Endothelial cell of umbilical vein (primary cell): ENCODE measurements at regions of chr7 and their contacts with region 1.

Region 1: GRCh38 chr7:37352974-37353948 is 95.4 kb downstream of the ELMO1 start:
- DNase-seq: no peak
- H3K4me3 ChIP-seq: no peak overlapping the region
- H3K27ac ChIP-seq: peak overlapping the region; percentile 66
- H3K4me1 ChIP-seq: peaks cover 21% of the 10 kb centered on the region
- H3K27me3 ChIP-seq: no peaks in the 10 kb centered on the region
- CTCF ChIP-seq: peak; percentile 6 to 11
- POLR2A ChIP-seq: no peak

Region 2: DNA sequence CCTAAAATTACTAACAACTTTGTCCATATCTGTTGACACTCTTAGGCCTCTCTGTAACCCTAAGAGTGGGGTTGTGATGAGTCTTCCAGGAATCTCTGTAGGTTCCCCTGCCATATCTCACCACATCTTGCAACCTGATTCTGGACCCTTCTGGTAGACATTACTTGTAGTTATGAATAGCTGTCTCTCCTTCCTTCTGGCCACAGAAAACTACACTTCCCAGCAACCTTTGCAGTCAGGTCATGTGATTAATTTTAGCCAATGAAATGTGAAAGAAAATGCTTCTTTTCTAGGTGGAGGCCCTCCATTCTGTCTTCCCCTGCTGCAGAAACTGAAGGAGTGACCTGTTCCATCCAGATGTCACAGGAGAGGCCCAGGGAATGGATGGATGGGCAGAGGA is 481.4 kb before region 1 on chr7:
- CTCF ChIA-PET with region 1: no interaction called
- POLR2A ChIA-PET with region 1: no interaction called
- dilution Hi-C with region 1: no loop called
- intact Hi-C with region 1: no loop called
- DNase-seq: peak; percentile 18
- H3K4me3 ChIP-seq: no peak overlapping the region
- H3K27ac ChIP-seq: no peak overlapping the region
- H3K4me1 ChIP-seq: no peaks in the 10 kb centered on the region
- H3K27me3 ChIP-seq: no peaks in the 10 kb centered on the region
- CTCF ChIP-seq: no peak
- POLR2A ChIP-seq: no peak

Region 3: GRCh38 chr7:37408291-37409228 is 55.3 kb after region 1 on chr7:
- CTCF ChIA-PET with region 1: no interaction called
- POLR2A ChIA-PET with region 1: no interaction called
- dilution Hi-C with region 1: no loop called
- intact Hi-C with region 1: no loop called
- DNase-seq: peak; percentile 73
- H3K4me3 ChIP-seq: peak overlapping the region in 1 of 3 experiments; percentile 49
- H3K27ac ChIP-seq: no peak overlapping the region
- H3K4me1 ChIP-seq: peaks cover 18% of the 10 kb centered on the region
- H3K27me3 ChIP-seq: no peaks in the 10 kb centered on the region
- CTCF ChIP-seq: no peak
- POLR2A ChIP-seq: no peak

Region 4: DNA sequence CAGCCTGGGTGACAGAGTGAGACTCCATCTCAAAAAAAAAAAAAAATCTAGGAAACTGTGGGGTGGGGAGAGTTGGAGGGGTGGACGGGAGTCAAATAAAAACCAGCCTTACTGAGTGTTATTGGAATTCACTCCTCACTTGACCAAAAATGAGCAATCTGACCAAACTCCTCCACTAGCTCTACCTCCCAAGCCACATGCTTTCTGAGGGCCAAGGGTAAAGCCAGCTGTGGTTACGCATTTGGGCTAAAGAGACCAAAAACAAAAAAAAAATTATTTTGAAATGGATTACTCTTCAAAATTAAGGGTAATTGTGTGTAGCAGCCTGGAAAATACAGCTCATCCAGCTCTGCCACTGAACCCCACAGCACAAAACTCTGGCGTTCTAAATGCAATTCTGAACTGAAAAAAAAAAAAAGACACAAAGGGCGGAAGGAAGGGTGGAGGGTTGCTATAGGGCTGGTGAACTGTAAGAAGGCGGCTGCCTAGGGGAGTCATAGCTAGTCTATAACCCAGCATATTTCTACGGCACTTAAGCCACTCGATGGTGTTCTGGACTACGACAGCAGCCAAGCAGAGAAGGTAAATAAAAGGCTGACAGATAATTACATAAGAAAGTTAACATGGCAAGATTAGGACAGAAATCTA is 87.6 kb after region 1 on chr7:
- CTCF ChIA-PET with region 1: no interaction called
- POLR2A ChIA-PET with region 1: no interaction called
- dilution Hi-C with region 1: no loop called
- intact Hi-C with region 1: loop called (anchors 2 kb)
- DNase-seq: peak; percentile 91
- H3K4me3 ChIP-seq: peak overlapping the region in 1 of 3 experiments; percentile 45
- H3K27ac ChIP-seq: peak overlapping the region; percentile 91
- H3K4me1 ChIP-seq: peaks cover 22% of the 10 kb centered on the region
- H3K27me3 ChIP-seq: no peaks in the 10 kb centered on the region
- CTCF ChIP-seq: no peak
- POLR2A ChIP-seq: no peak

Region 5: GRCh38 chr7:37504801-37505200 is 151.5 kb after region 1 on chr7:
- CTCF ChIA-PET with region 1: interaction called, 3 read pairs
- POLR2A ChIA-PET with region 1: no interaction called
- dilution Hi-C with region 1: no loop called
- intact Hi-C with region 1: loop called (anchors 5 kb)
- DNase-seq: peak; percentile 79
- H3K4me3 ChIP-seq: no peak overlapping the region
- H3K27ac ChIP-seq: no peak overlapping the region
- H3K4me1 ChIP-seq: peaks cover 7% of the 10 kb centered on the region
- H3K27me3 ChIP-seq: peaks cover 9 to 11% of the 10 kb centered on the region in 2 experiments
- CTCF ChIP-seq: no peak
- POLR2A ChIP-seq: no peak

Region 6: GRCh38 chr7:37642028-37642540 is 288.8 kb after region 1 on chr7:
- CTCF ChIA-PET with region 1: no interaction called
- POLR2A ChIA-PET with region 1: no interaction called
- dilution Hi-C with region 1: no loop called
- intact Hi-C with region 1: no loop called
- DNase-seq: no peak
- H3K4me3 ChIP-seq: no peak overlapping the region
- H3K27ac ChIP-seq: no peak overlapping the region
- H3K4me1 ChIP-seq: no peaks in the 10 kb centered on the region
- H3K27me3 ChIP-seq: no peaks in the 10 kb centered on the region
- CTCF ChIP-seq: no peak
- POLR2A ChIP-seq: no peak

Region 7: GRCh38 chr7:38086857-38087256 is 733.6 kb after region 1 on chr7:
- CTCF ChIA-PET with region 1: no interaction called
- POLR2A ChIA-PET with region 1: no interaction called
- dilution Hi-C with region 1: no loop called
- intact Hi-C with region 1: no loop called
- DNase-seq: no peak
- H3K4me3 ChIP-seq: no peak overlapping the region
- H3K27ac ChIP-seq: no peak overlapping the region
- H3K4me1 ChIP-seq: no peaks in the 10 kb centered on the region
- H3K27me3 ChIP-seq: no peaks in the 10 kb centered on the region
- CTCF ChIP-seq: no peak
- POLR2A ChIP-seq: no peak